OCI-LY7 (cell line): ENCODE measurements at regions of chr9 and their contacts with region 1.

Region 1: DNA sequence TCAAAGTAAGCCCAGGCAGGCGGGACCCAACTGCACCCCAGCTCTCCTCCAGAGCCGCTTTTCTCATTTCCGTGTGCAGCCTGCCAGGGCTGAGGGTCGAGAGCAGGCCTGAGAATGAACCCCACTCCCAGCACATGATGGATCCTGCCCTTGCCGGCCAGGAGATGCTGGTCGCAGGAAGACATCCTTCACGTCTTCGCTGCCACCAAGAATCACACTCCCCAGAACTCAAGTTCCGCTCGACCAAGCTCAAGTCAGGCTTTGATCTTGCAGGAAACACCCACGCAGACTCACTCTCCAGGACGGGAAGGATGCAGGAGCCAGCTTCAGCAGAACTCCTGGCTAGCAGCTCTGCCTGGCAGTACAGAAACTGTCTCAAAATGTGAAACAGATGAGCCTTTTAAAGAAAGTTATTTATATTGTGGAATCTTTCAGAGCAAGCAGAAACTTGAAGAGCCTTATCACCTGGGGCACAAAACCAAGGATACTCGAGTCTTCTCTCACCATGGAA is 102.4 kb downstream of the ROR2 start:
- DNase-seq: no peak
- H3K4me3 ChIP-seq: no peak overlapping the region
- H3K27ac ChIP-seq: no peak overlapping the region
- H3K4me1 ChIP-seq: no peaks in the 10 kb centered on the region
- CTCF ChIP-seq: no peak

Region 2: GRCh38 chr9:91836515-91836914 is 11.1 kb before region 1 on chr9:
- CTCF ChIA-PET with region 1: no interaction called
- POLR2A ChIA-PET with region 1: no interaction called
- intact Hi-C with region 1: no loop called
- DNase-seq: no peak
- H3K4me3 ChIP-seq: no peak overlapping the region
- H3K27ac ChIP-seq: no peak overlapping the region
- H3K4me1 ChIP-seq: peaks cover 18% of the 10 kb centered on the region
- CTCF ChIP-seq: no peak

Region 3: GRCh38 chr9:91873637-91874051 is 26.0 kb after region 1 on chr9:
- CTCF ChIA-PET with region 1: no interaction called
- POLR2A ChIA-PET with region 1: no interaction called
- intact Hi-C with region 1: loop called (anchors 1 kb)
- DNase-seq: no peak
- H3K4me3 ChIP-seq: no peak overlapping the region
- H3K27ac ChIP-seq: no peak overlapping the region
- H3K4me1 ChIP-seq: no peaks in the 10 kb centered on the region
- CTCF ChIP-seq: no peak

Region 4: GRCh38 chr9:91914405-91914804 is 66.8 kb after region 1 on chr9:
- CTCF ChIA-PET with region 1: no interaction called
- POLR2A ChIA-PET with region 1: no interaction called
- intact Hi-C with region 1: loop called (anchors 10 kb)
- DNase-seq: no peak
- H3K4me3 ChIP-seq: no peak overlapping the region
- H3K27ac ChIP-seq: no peak overlapping the region
- H3K4me1 ChIP-seq: peaks cover 13% of the 10 kb centered on the region
- CTCF ChIP-seq: no peak